ENCODE measurements at regions of chr12 and their contacts with region 1.

Region 1: GRCh38 chr12:10001171-10001776 is 2.4 kb upstream of the CLEC1B start:
- DNase-seq: no peak
- H3K4me3 Mint-ChIP-seq: no peak overlapping the region
- H3K27ac Mint-ChIP-seq: no peak overlapping the region
- H3K4me1 Mint-ChIP-seq: no peaks in the 10 kb centered on the region
- H3K27me3 Mint-ChIP-seq: peaks cover 50% of the 10 kb centered on the region

Region 2: DNA sequence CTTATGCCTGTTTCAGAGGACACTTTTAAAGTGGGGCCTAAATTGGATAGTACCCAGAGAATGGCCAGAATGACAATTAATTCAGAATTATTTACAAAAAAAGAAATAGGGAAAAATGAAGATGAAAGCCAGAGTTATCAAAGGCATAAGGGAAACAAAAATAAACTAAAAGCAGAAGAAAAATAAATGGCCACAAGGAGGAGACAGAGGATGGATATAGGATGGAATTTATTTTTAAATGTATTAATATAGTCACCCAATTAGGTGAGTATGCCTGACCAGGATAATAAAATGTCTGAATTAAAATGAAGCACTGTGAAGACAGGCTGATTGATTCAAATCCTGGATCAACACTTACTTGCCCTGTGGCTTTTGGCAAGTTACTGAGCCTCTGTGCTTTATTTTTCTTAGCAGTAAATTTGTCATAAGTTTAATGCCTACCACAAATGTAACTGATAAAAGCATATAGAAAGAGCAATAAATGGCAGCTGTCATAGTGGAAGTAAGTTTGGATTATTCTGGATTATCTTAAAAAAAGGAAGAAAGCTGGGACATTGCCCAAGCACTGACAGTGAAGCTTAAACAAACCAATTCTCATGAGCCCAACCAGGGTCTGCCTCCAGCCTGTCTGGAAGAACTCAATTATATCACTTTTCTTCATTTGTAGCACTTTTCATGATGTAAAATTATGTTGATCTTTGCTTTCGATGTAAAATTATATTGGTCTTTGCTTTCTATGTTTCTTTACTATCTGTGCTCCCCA is 32.7 kb after region 1 on chr12:
- intact Hi-C with region 1: loop called (anchors 2 kb)
- DNase-seq: peak; percentile 30
- H3K4me3 Mint-ChIP-seq: no peak overlapping the region
- H3K27ac Mint-ChIP-seq: no peak overlapping the region
- H3K4me1 Mint-ChIP-seq: no peaks in the 10 kb centered on the region
- H3K27me3 Mint-ChIP-seq: peaks cover 14% of the 10 kb centered on the region

Region 3: DNA sequence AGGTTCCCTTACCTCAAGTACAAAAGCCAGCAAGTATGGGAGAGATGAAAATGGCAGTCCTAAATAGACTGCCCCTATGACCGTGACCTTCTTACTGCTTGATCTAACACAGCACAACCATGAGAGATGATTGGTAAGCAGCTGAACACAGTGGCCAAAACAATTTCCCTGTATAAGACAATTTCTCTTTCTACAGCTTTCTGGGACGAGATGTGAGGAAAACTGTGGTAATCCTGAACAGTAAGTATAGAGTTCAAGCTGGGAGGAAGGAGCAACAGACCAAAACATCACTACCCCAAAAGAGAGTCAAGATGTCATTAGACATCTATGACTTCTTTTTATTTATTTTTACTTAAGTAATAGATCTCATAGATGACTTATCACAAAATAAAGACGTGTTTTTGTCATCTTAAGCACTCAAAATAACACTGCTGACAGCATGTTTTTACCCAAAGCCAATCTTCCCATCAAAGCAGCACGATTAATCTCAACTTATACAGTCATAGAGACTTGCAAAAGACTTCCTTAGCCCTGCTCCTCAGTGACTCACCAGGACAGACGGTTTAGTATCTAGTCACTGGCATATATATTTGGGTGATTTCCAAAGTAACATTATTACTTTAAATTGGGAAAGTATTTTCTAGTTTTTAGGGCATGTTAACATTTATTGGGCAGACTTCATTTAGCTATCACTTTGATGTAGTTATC is 181.2 kb after region 1 on chr12:
- intact Hi-C with region 1: no loop called
- DNase-seq: no peak
- H3K4me3 Mint-ChIP-seq: no peak overlapping the region
- H3K27ac Mint-ChIP-seq: no peak overlapping the region
- H3K4me1 Mint-ChIP-seq: no peaks in the 10 kb centered on the region
- H3K27me3 Mint-ChIP-seq: peaks cover 17% of the 10 kb centered on the region

Measured in activated CD4-positive, alpha-beta T cell treated with anti-CD3 and anti-CD28 coated beads, Interleukin-2, amount 10 ng/mL, durations not matched to agents 24 days and 14 days (primary cell).